ENCODE measurements at regions of chr20 and their contacts with region 1.

Region 1: DNA sequence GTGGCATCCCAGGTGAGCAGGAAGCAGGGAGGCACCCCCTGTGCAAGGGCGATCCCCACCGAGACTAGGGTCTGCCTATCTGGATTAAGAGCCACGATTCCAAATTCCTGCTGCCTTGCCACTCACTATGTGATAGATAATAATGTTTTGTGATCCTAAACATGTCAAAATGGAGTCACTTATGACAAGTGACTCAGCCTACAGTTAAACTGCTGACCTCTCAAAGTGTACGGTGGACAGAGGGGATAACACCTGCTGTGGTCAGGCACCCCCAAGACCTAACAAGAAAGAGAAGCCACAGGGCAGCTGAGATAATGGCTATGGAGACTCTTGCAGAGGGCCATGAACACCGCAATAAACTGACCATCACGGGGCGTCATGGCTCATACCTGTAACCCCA is 16.0 kb upstream of the SNTA1 start:
- DNase-seq: no peak
- ATAC-seq: no peak
- H3K4me3 ChIP-seq: no peak overlapping the region
- H3K27ac ChIP-seq: no peak overlapping the region
- H3K4me1 ChIP-seq: no peaks in the 10 kb centered on the region
- H3K27me3 ChIP-seq: no peaks in the 10 kb centered on the region
- CTCF ChIP-seq: no peak

Region 2: GRCh38 chr20:33148040-33148439 is 311.6 kb before region 1 on chr20:
- CTCF ChIA-PET with region 1: no interaction called
- POLR2A ChIA-PET with region 1: no interaction called
- in situ Hi-C with region 1: no loop called
- intact Hi-C with region 1: no loop called
- DNase-seq: no peak
- ATAC-seq: no peak
- H3K4me3 ChIP-seq: no peak overlapping the region
- H3K27ac ChIP-seq: no peak overlapping the region
- H3K4me1 ChIP-seq: no peaks in the 10 kb centered on the region
- H3K27me3 ChIP-seq: peaks cover 24% of the 10 kb centered on the region
- CTCF ChIP-seq: no peak

Region 3: GRCh38 chr20:33423141-33423834 is 36.3 kb before region 1 on chr20:
- CTCF ChIA-PET with region 1: no interaction called
- POLR2A ChIA-PET with region 1: interaction called, 15 read pairs
- in situ Hi-C with region 1: no loop called
- intact Hi-C with region 1: no loop called
- DNase-seq: no peak
- ATAC-seq: no peak; the same call in 1 of the 2 replicates
- H3K4me3 ChIP-seq: no peak overlapping the region
- H3K27ac ChIP-seq: no peak overlapping the region
- H3K4me1 ChIP-seq: no peaks in the 10 kb centered on the region
- H3K27me3 ChIP-seq: no peaks in the 10 kb centered on the region
- CTCF ChIP-seq: no peak

Region 4: GRCh38 chr20:33437141-33437911 is 22.3 kb before region 1 on chr20:
- CTCF ChIA-PET with region 1: no interaction called
- POLR2A ChIA-PET with region 1: no interaction called
- in situ Hi-C with region 1: no loop called
- intact Hi-C with region 1: no loop called
- DNase-seq: no peak
- ATAC-seq: no peak
- H3K4me3 ChIP-seq: no peak overlapping the region
- H3K27ac ChIP-seq: no peak overlapping the region
- H3K4me1 ChIP-seq: no peaks in the 10 kb centered on the region
- H3K27me3 ChIP-seq: no peaks in the 10 kb centered on the region
- CTCF ChIP-seq: no peak

Region 5: DNA sequence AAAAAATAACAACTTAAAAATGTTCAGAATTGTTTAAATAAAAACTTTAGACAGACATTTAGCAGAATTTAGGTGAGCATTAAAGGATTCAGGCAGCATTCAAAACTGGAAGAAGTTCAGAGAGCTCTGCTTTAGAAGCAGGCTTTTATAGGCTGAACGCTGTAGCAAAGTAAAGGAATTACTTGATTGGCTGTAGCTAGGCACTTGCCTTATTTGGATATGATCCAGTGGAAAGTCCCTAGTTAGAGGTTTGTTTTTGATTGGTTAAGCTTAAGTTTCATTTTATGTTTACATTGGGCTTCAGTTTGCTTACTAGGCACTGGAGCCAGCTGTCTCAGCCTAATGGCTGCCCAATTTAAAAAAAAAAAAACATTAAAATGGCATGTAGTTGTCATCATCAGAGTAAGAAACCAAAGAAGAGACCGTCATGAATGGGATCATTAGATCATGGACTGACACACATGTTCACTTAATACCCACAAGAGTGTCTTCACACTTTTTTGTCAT is 95.4 kb after region 1 on chr20:
- CTCF ChIA-PET with region 1: no interaction called
- POLR2A ChIA-PET with region 1: no interaction called
- in situ Hi-C with region 1: no loop called
- intact Hi-C with region 1: no loop called
- DNase-seq: peak; percentile 69
- ATAC-seq: peak; percentile 98
- H3K4me3 ChIP-seq: no peak overlapping the region
- H3K27ac ChIP-seq: peak overlapping the region; percentile 72
- H3K4me1 ChIP-seq: peaks cover 10% of the 10 kb centered on the region; the same call in 1 of the 2 replicates
- H3K27me3 ChIP-seq: no peaks in the 10 kb centered on the region
- CTCF ChIP-seq: no peak

Region 6: GRCh38 chr20:33653218-33653899 is 193.8 kb after region 1 on chr20:
- CTCF ChIA-PET with region 1: interaction called, 7 read pairs
- POLR2A ChIA-PET with region 1: no interaction called
- in situ Hi-C with region 1: no loop called
- intact Hi-C with region 1: loop called (anchors 5 kb)
- DNase-seq: peak; percentile 55
- ATAC-seq: peak; percentile 83
- H3K4me3 ChIP-seq: no peak overlapping the region
- H3K27ac ChIP-seq: no peak overlapping the region
- H3K4me1 ChIP-seq: peaks cover 4% of the 10 kb centered on the region
- H3K27me3 ChIP-seq: no peaks in the 10 kb centered on the region
- CTCF ChIP-seq: peak; percentile 90; the same call in 1 of the 2 replicates

Region 7: GRCh38 chr20:33666293-33667244 is 207.0 kb after region 1 on chr20 and contains the start of gene ACTL10:
- CTCF ChIA-PET with region 1: no interaction called
- POLR2A ChIA-PET with region 1: no interaction called
- in situ Hi-C with region 1: no loop called
- intact Hi-C with region 1: no loop called
- DNase-seq: no peak
- ATAC-seq: no peak
- H3K4me3 ChIP-seq: peak within 1 kb of the TSS in 1 of 2 experiments; percentile 7; a peak in 1 of 4 replicates
- H3K27ac ChIP-seq: no peak within 1 kb of the TSS
- H3K4me1 ChIP-seq: peaks cover 14% of the 10 kb centered on the region
- H3K27me3 ChIP-seq: no peaks in the 10 kb centered on the region
- CTCF ChIP-seq: no peak
- total RNA-seq, gene ACTL10: not detected

Measured in Panc1 (cell line).